MCF 10A (cell line): ENCODE measurements at regions of chr16 and their contacts with region 1.

Region 1: DNA sequence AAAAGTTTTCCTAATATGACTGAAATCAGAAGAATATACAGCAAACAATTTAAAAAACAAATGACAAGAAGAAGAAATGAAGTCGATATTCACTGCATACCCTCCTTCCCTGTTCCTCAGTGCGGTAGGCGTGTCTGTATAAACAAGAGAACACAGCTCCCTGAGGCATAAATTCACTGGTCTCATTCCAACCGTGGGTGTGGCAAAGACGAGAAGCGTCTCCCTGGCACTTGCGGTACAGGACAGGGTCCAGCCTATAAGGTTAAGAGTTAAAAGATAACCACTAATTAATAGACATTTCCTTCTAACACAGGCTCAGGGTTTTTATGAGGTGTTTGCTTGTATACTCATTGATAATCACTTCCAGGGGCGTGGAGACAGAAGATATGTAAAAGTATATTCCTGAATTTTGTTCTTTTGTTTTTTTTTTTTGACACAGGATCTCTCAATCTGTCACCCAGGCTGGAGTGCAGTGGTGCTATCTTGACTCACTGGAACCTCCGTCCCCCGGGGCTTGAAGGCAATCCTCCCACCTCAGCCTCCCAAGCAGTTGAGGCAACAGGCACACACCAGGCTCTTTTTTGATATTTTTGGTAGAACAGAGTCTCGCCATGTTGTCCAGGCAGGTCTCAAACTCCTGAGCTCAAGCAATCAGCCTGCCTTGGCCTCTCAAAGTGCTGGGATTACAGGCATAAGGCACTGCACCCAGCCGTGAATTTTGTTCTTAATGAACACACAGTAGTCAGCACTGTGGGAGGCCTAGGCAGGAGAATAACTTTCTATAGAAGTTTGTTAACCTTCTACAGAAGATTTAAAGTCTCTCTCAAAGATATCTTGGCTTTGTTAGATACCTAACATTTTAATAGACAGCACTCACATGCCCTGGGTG is 59.1 kb upstream of the CLEC18B start:
- DNase-seq: peak; percentile 91
- H3K4me3 Mint-ChIP-seq: peak overlapping the region; percentile 57
- H3K27ac Mint-ChIP-seq: peak overlapping the region; percentile 92
- H3K4me1 Mint-ChIP-seq: peaks cover 28% of the 10 kb centered on the region
- H3K27me3 Mint-ChIP-seq: no peaks in the 10 kb centered on the region
- CTCF ChIP-seq: no peak

Region 2: DNA sequence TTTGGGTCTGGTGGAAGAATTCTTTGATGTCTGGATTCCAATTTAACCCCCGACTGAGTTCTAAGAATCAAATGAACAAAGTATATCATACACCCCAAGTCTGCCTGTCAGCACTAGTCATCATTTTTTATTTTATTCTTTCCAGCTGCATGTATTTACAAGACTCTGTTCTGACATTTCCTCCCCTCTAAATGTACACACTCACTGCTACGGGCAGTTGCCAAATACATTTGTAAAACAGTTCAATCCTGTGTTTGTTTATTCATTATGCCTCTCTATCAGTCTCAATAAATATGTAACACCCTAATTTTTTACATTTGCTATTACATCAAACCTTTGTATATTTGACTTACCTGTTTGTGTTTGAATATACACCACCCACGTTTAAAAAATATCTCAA is 606.1 kb before region 1 on chr16:
- CTCF ChIA-PET with region 1: no interaction called
- POLR2A ChIA-PET with region 1: no interaction called
- intact Hi-C with region 1: no loop called
- DNase-seq: no peak
- H3K4me3 Mint-ChIP-seq: no peak overlapping the region
- H3K27ac Mint-ChIP-seq: no peak overlapping the region
- H3K4me1 Mint-ChIP-seq: no peaks in the 10 kb centered on the region
- H3K27me3 Mint-ChIP-seq: peaks cover 68% of the 10 kb centered on the region
- CTCF ChIP-seq: no peak

Region 3: GRCh38 chr16:74199066-74199841 is 281.1 kb before region 1 on chr16:
- CTCF ChIA-PET with region 1: no interaction called
- POLR2A ChIA-PET with region 1: no interaction called
- intact Hi-C with region 1: no loop called
- DNase-seq: no peak
- H3K4me3 Mint-ChIP-seq: no peak overlapping the region
- H3K27ac Mint-ChIP-seq: no peak overlapping the region
- H3K4me1 Mint-ChIP-seq: no peaks in the 10 kb centered on the region
- H3K27me3 Mint-ChIP-seq: peaks cover 54% of the 10 kb centered on the region
- CTCF ChIP-seq: no peak

Region 4: GRCh38 chr16:74439685-74440084 is 40.7 kb before region 1 on chr16:
- CTCF ChIA-PET with region 1: no interaction called
- POLR2A ChIA-PET with region 1: no interaction called
- intact Hi-C with region 1: no loop called
- DNase-seq: no peak
- H3K4me3 Mint-ChIP-seq: no peak overlapping the region
- H3K27ac Mint-ChIP-seq: no peak overlapping the region
- H3K4me1 Mint-ChIP-seq: no peaks in the 10 kb centered on the region
- H3K27me3 Mint-ChIP-seq: no peaks in the 10 kb centered on the region
- CTCF ChIP-seq: no peak

Region 5: DNA sequence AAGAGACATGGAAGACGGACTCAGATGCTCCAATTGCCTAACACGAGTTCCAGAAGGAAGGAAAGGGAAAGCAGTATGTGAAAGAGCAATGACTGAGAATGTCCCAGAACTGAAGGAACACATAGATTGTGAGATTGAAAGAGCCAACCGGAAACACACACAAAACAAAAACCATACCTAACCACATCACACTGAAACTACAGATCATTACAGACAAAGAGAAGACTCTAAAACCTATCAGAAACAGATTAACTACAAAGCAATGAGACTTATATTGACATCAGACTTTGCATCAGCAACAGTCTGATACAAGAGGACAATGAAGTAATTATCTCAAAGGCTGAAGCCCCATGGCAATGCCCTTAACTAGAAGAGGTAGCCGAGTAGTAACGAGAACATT is 13.5 kb before region 1 on chr16:
- CTCF ChIA-PET with region 1: interaction called, 9 read pairs
- POLR2A ChIA-PET with region 1: interaction called, 17 read pairs
- intact Hi-C with region 1: no loop called
- DNase-seq: no peak
- H3K4me3 Mint-ChIP-seq: no peak overlapping the region
- H3K27ac Mint-ChIP-seq: no peak overlapping the region
- H3K4me1 Mint-ChIP-seq: peaks cover 13% of the 10 kb centered on the region
- H3K27me3 Mint-ChIP-seq: no peaks in the 10 kb centered on the region
- CTCF ChIP-seq: no peak